ENCODE measurements at regions of chr3 and their contacts with region 1.

Region 1: GRCh38 chr3:141452036-141452435 is 34.8 kb upstream of the RASA2 start:
- DNase-seq: peak; percentile 50
- H3K4me3 Mint-ChIP-seq: no peak overlapping the region
- H3K27ac Mint-ChIP-seq: no peak overlapping the region
- H3K4me1 Mint-ChIP-seq: peaks cover 35% of the 10 kb centered on the region
- H3K27me3 Mint-ChIP-seq: no peaks in the 10 kb centered on the region

Region 2: DNA sequence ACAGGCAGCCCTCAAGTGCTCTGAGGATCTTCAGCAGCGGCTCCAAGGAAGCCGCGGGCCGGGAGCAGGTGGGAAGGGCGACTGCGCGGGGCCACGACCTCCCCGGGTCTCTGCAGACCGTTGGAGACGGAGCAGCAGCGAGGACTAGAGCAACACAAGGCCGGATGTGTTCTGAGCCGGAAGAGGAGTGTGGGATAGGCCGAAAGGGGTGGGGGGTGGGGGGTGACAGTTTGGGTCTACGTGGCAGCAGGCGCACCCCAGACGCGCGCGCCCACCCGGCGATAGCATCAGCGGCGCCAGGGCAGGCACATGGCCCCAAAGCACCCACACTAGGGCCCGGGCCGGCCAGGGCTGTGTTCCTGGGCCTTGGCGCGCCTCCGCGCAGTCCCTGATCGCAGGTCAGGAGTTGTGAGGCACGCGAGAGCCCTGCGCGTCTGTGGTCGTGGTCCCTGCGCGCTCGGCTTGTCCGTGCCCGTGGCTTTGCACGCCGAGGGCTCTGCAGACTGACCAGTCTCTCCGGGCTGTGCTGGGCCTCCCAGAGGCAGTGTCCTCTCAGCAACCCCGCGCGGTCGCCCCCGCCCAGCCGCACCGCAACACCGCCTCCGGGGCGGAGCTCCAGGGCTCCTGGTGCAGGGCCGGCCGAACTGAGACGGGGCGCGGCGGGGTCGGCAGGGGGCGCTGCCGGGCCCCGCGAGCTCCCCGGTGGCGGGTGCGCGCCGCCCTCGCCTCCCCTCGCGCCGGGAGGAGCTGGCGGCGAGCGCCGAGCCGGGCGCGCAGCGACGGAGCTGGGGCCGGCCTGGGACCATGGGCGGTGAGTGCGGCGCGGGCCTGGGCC is 220.7 kb before region 1 on chr3 and contains the start of gene PXYLP1:
- CTCF ChIA-PET with region 1: interaction called, 10 read pairs
- POLR2A ChIA-PET with region 1: interaction called, 4 read pairs
- intact Hi-C with region 1: loop called (anchors 5 kb)
- DNase-seq: peak; percentile 95
- H3K4me3 Mint-ChIP-seq: peak within 1 kb of the TSS; percentile 85
- H3K27ac Mint-ChIP-seq: peak within 1 kb of the TSS; percentile 87
- H3K4me1 Mint-ChIP-seq: peaks cover 25% of the 10 kb centered on the region
- H3K27me3 Mint-ChIP-seq: no peaks in the 10 kb centered on the region
- total RNA-seq, gene PXYLP1: 9.0 to 11.6 TPM

Region 3: DNA sequence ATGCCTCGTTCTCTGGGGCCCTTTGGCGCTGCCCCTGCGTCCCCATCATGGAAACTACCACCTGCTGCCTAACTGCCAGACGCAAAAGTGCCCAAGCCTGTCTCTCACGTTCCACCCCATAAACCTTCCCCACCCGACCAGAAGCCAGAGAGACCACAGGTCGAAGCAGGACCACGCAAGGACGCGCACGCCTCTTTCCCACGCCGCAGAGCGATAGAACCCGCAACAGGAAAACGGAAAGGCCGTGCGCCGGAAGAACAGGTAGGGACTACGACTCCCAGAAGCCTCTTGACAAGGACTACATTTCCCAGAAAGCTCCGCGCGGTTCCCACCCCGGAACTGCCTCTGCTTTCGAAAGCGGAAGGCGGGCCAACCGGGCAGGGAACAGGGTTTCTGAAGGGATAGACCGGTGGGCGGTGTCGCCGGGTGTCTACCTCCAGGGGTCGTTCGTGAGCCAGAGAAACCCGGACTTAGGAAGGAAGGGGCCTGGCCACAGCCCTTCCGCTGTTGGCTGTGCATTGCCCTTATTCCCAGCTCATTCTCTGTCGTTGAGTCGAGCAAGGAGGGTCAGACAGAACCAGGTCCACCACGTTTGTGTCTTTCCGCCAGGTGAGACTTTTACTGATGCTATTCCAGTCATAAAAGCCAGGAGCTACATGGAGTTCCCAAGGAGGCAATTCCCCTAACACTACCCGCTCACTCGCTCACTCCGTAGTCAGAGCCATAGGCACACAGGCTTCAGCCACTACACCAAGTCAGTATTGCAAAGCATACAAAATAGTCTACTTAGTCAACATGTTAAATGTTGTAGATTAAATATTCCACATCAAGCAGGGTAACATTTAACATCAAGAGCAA is 140.3 kb before region 1 on chr3:
- CTCF ChIA-PET with region 1: interaction called, 200 read pairs
- POLR2A ChIA-PET with region 1: interaction called, 6 read pairs
- intact Hi-C with region 1: loop called (anchors 1 kb)
- DNase-seq: peak; percentile 100
- H3K4me3 Mint-ChIP-seq: peak overlapping the region; percentile 89
- H3K27ac Mint-ChIP-seq: peak overlapping the region; percentile 90
- H3K4me1 Mint-ChIP-seq: peaks cover 49% of the 10 kb centered on the region
- H3K27me3 Mint-ChIP-seq: no peaks in the 10 kb centered on the region

Region 4: GRCh38 chr3:141370065-141370533 is 81.9 kb before region 1 on chr3:
- CTCF ChIA-PET with region 1: interaction called, 23 read pairs
- POLR2A ChIA-PET with region 1: no interaction called
- intact Hi-C with region 1: no loop called
- DNase-seq: peak; percentile 68
- H3K4me3 Mint-ChIP-seq: no peak overlapping the region
- H3K27ac Mint-ChIP-seq: peak overlapping the region; percentile 40
- H3K4me1 Mint-ChIP-seq: peaks cover 58% of the 10 kb centered on the region
- H3K27me3 Mint-ChIP-seq: no peaks in the 10 kb centered on the region

Region 5: DNA sequence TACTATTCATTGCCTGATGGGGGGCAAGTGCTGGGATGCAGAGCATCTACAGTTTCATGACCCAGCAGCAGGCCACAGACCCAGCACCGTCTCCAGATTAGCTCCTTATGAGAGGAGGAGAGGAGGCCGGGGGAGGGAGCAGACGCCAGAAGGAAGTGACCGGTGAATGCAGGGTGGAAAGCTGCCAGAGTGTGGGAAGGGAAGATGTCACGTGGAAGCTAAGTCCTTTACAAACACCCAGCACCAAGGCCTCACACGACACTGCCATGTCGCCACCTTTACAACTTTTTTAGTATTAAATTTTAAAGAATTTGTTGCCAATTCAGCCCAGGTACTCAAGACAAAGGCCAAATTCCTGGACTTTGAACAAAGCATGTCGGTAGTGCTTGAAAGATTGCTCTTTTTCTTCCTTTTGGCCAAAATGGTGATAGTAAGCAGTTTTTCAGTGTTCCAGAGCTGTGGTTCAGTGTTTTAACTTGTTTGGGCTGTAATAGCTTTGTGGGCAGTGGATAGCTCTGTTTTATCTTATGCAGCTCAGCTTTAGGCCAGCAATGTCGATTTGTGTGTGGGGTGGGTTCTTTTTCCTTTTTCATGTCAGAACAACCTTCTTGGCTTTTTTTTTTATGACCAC is 25.5 kb before region 1 on chr3:
- CTCF ChIA-PET with region 1: interaction called, 19 read pairs
- POLR2A ChIA-PET with region 1: no interaction called
- intact Hi-C with region 1: no loop called
- DNase-seq: no peak
- H3K4me3 Mint-ChIP-seq: no peak overlapping the region
- H3K27ac Mint-ChIP-seq: no peak overlapping the region
- H3K4me1 Mint-ChIP-seq: peaks cover 33% of the 10 kb centered on the region
- H3K27me3 Mint-ChIP-seq: no peaks in the 10 kb centered on the region

Region 6: GRCh38 chr3:141644931-141645330 is 192.9 kb after region 1 on chr3:
- CTCF ChIA-PET with region 1: interaction called, 15 read pairs
- POLR2A ChIA-PET with region 1: no interaction called
- intact Hi-C with region 1: no loop called
- DNase-seq: peak; percentile 86
- H3K4me3 Mint-ChIP-seq: no peak overlapping the region
- H3K27ac Mint-ChIP-seq: no peak overlapping the region
- H3K4me1 Mint-ChIP-seq: no peaks in the 10 kb centered on the region
- H3K27me3 Mint-ChIP-seq: no peaks in the 10 kb centered on the region

Measured in activated CD4-positive, alpha-beta memory T cell treated with anti-CD3 and anti-CD28 coated beads for 36 hours (primary cell).